Activated CD4-positive, alpha-beta memory T cell treated with anti-CD3 and anti-CD28 coated beads for 36 hours (primary cell): ENCODE measurements at regions of chr10 and their contacts with region 1.

Region 1: GRCh38 chr10:32239770-32240169 is 107.2 kb downstream of the EPC1 start:
- DNase-seq: no peak
- H3K4me3 Mint-ChIP-seq: no peak overlapping the region
- H3K27ac Mint-ChIP-seq: no peak overlapping the region
- H3K4me1 Mint-ChIP-seq: peaks cover 14% of the 10 kb centered on the region
- H3K27me3 Mint-ChIP-seq: peaks cover 2% of the 10 kb centered on the region

Region 2: GRCh38 chr10:32149252-32149955 is 90.4 kb before region 1 on chr10:
- CTCF ChIA-PET with region 1: no interaction called
- POLR2A ChIA-PET with region 1: interaction called, 6 read pairs
- intact Hi-C with region 1: loop called (anchors 1 kb)
- DNase-seq: peak; percentile 58
- H3K4me3 Mint-ChIP-seq: no peak overlapping the region
- H3K27ac Mint-ChIP-seq: peak overlapping the region; percentile 43
- H3K4me1 Mint-ChIP-seq: peaks cover 29% of the 10 kb centered on the region
- H3K27me3 Mint-ChIP-seq: peaks cover 4% of the 10 kb centered on the region

Region 3: GRCh38 chr10:32318476-32318896 is 78.7 kb after region 1 on chr10:
- CTCF ChIA-PET with region 1: interaction called, 3 read pairs
- POLR2A ChIA-PET with region 1: interaction called, 8 read pairs
- intact Hi-C with region 1: loop called (anchors 1 kb)
- DNase-seq: peak; percentile 55
- H3K4me3 Mint-ChIP-seq: peak overlapping the region; percentile 48
- H3K27ac Mint-ChIP-seq: peak overlapping the region; percentile 88
- H3K4me1 Mint-ChIP-seq: peaks cover 77% of the 10 kb centered on the region
- H3K27me3 Mint-ChIP-seq: no peaks in the 10 kb centered on the region

Region 4: GRCh38 chr10:32340596-32341180 is 100.9 kb after region 1 on chr10:
- CTCF ChIA-PET with region 1: interaction called, 12 read pairs
- POLR2A ChIA-PET with region 1: interaction called, 8 read pairs
- intact Hi-C with region 1: loop called (anchors 2 kb)
- DNase-seq: peak; percentile 67
- H3K4me3 Mint-ChIP-seq: peak overlapping the region; percentile 17
- H3K27ac Mint-ChIP-seq: peak overlapping the region; percentile 73
- H3K4me1 Mint-ChIP-seq: peaks cover 87% of the 10 kb centered on the region
- H3K27me3 Mint-ChIP-seq: no peaks in the 10 kb centered on the region

Region 5: DNA sequence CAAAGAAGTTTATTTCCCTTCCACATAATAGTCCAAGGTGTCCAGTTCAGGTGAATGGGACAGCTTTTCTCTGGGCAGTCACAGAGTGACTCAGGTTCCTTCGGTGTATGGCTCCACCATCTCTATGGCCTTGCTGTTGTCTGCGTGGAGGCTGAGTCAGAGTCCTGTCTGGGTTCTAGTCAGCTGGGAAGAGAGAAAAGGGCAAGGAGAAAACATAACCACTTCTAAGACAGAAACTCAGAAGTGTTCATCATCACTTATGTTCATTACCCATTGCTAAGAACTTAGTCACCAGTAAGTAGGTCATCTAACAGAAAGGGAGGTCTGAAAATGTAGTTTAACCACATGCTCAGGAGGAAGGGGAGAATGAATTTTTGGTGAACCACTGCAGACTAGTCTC is 173.7 kb after region 1 on chr10:
- CTCF ChIA-PET with region 1: no interaction called
- POLR2A ChIA-PET with region 1: no interaction called
- intact Hi-C with region 1: loop called (anchors 1 kb)
- DNase-seq: peak; percentile 79
- H3K4me3 Mint-ChIP-seq: no peak overlapping the region
- H3K27ac Mint-ChIP-seq: peak overlapping the region; percentile 26
- H3K4me1 Mint-ChIP-seq: peaks cover 17% of the 10 kb centered on the region
- H3K27me3 Mint-ChIP-seq: no peaks in the 10 kb centered on the region